Stomach (tissue), 19 donors: ENCODE measurements at regions of chr10 and their contacts with region 1.

Region 1: GRCh38 chr10:117442944-117443685 is 67.9 kb upstream of the PDZD8 start:
- DNase-seq: peak; percentile 78 to 84
- H3K4me3 ChIP-seq: peak overlapping the region in 1 of 4 donors; percentile 14
- H3K27ac ChIP-seq: peak overlapping the region in 1 of 5 donors; percentile 11
- H3K4me1 ChIP-seq: peaks cover 0 to 8% (median 4%) of the 10 kb centered on the region in 4 donors
- H3K27me3 ChIP-seq: peaks cover 0 to 25% (median 0%) of the 10 kb centered on the region in 3 donors
- CTCF ChIP-seq: peak in 5 of 7 experiments; percentile 51 to 84 (median 62)
- EP300 ChIP-seq: no peak
- POLR2A ChIP-seq: no peak

Region 2: GRCh38 chr10:117216611-117217195 is 226.4 kb before region 1 on chr10:
- intact Hi-C with region 1: loop called (anchors 10 kb)
- DNase-seq: peak; percentile 73 to 92
- H3K4me3 ChIP-seq: peak overlapping the region; percentile 36 to 56 (median 50)
- H3K27ac ChIP-seq: no peak overlapping the region
- H3K4me1 ChIP-seq: peaks cover 9 to 17% (median 16%) of the 10 kb centered on the region in 4 donors
- H3K27me3 ChIP-seq: peaks cover 0 to 80% (median 36%) of the 10 kb centered on the region in 3 donors
- CTCF ChIP-seq: peak in 6 of 7 experiments; percentile 10 to 100 (median 99)
- EP300 ChIP-seq: no peak
- POLR2A ChIP-seq: no peak

Region 3: DNA sequence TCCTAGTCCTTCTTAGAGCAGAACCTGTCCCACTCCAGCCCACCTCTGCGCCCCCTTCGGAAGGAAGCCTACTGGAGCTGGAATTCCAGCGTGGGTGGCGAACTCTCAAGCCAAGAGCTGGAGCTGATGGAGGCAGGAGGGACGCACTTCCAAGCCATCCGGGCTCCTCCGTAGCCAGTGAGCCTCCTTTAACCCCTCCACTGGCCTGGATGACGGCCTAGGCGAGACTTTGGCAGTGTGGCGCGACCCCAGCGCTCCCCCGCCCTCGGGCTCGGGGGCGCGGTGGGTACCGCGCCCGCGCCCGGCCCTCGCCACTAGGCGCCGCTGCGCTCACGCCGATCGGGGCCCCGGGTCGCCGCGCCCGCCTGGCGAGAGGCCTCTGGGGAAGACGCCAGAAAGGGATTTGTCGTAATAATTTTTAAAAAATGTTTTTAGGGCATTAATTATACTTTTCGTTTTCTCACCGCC is 94.4 kb after region 1 on chr10:
- intact Hi-C with region 1: no loop called
- DNase-seq: peak in 1 of 2 donors; percentile 70
- H3K4me3 ChIP-seq: peak overlapping the region in 1 of 4 donors; percentile 6
- H3K27ac ChIP-seq: no peak overlapping the region
- H3K4me1 ChIP-seq: peaks cover 30 to 64% (median 50%) of the 10 kb centered on the region in 4 donors
- H3K27me3 ChIP-seq: peaks cover 69 to 100% (median 97%) of the 10 kb centered on the region in 3 donors
- CTCF ChIP-seq: peak in 3 of 7 experiments; percentile 63 to 72 (median 63)
- EP300 ChIP-seq: no peak
- POLR2A ChIP-seq: no peak

Region 4: DNA sequence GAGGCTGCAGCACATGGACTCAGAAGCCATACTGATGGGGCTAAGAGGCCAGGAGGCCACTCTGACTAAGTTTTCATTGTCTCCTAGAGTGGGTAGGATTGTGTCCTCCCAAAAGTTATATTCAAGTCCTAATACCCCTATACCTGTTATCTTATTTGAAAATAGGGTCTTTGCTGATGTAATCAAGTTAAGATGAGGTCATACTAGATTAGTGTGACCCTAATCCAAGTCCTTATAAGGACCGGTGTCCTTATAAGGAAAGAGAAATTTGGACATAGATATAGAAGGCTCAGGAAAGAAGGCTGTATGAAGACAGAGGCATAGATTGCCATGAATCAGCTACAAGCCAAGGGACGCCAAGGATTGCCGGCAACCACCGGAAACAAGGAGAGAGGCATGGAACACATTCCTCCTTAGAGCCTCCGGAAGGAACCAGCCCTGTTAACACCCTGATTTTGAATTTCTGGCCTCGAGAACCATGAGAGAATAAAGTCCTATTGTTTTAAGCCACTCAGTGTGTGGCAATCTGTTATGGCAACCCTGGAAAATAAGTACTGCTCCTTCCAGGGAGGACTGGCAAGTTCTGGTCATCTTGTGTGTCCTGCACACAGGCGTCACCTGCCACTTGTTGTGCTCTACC is 256.4 kb after region 1 on chr10:
- intact Hi-C with region 1: no loop called
- DNase-seq: no peak
- H3K4me3 ChIP-seq: no peak overlapping the region
- H3K27ac ChIP-seq: no peak overlapping the region
- H3K4me1 ChIP-seq: no peaks in the 10 kb centered on the region
- H3K27me3 ChIP-seq: peaks cover 0 to 5% (median 0%) of the 10 kb centered on the region in 3 donors
- CTCF ChIP-seq: no peak
- EP300 ChIP-seq: no peak
- POLR2A ChIP-seq: no peak